Activated T-helper 2 cell treated with anti-CD3 and anti-CD28 coated beads, Interferon-gamma antibody, Interleukin-2, Interleukin-4, amounts not matched to agents 10 μg/mL and 5 μg/mL and 100 μg/mL, durations not matched to agents 14 hours and 24 hours and 36 hours (primary cell): ENCODE measurements at regions of chrX and their contacts with region 1.

Region 1: GRCh38 chrX:149830192-149830873 is 48.6 kb downstream of the MAGEA9 start:
- DNase-seq: peak; percentile 9
- H3K4me3 Mint-ChIP-seq: peak overlapping the region; percentile 66
- H3K27ac Mint-ChIP-seq: peak overlapping the region; percentile 86
- H3K4me1 Mint-ChIP-seq: peaks cover 28% of the 10 kb centered on the region
- H3K27me3 Mint-ChIP-seq: no peaks in the 10 kb centered on the region

Region 2: DNA sequence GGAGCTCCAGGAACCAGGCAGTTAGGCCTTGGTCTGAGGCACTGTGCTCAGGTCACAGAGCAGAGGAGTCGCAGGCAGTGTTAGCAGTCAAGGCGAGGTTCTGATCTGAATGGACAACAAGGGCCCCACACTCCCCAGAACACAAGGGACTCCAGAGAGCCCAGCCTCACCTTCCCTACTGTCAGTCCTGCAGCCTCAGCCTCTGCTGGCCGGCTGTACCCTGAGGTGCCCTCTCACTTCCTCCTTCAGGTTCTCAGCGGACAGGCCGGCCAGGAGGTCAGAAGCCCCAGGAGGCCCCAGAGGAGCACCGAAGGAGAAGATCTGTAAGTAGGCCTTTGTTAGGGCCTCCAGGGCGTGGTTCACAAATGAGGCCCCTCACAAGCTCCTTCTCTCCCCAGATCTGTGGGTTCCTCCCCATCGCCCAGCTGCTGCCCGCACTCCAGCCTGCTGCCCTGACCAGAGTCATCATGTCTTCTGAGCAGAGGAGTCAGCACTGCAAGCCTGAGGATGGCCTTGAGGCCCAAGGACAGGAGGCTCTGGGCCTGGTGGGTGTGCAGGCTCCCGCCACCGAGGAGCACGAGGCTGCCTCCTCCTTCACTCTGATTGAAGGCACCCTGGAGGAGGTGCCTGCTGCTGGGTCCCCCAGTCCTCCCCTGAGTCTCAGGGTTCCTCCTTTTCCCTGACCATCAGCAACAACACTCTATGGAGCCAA is 22.4 kb before region 1 on chrX:
- intact Hi-C with region 1: no loop called
- DNase-seq: no peak
- H3K4me3 Mint-ChIP-seq: no peak overlapping the region
- H3K27ac Mint-ChIP-seq: no peak overlapping the region
- H3K4me1 Mint-ChIP-seq: no peaks in the 10 kb centered on the region
- H3K27me3 Mint-ChIP-seq: peaks cover 2% of the 10 kb centered on the region

Region 3: GRCh38 chrX:149903889-149904748 is 73.8 kb after region 1 on chrX:
- intact Hi-C with region 1: loop called (anchors 10 kb)
- DNase-seq: no peak
- H3K4me3 Mint-ChIP-seq: peak overlapping the region; percentile 48
- H3K27ac Mint-ChIP-seq: peak overlapping the region; percentile 79
- H3K4me1 Mint-ChIP-seq: peaks cover 18% of the 10 kb centered on the region
- H3K27me3 Mint-ChIP-seq: no peaks in the 10 kb centered on the region